ENCODE measurements at regions of chr10 and their contacts with region 1.

Region 1: DNA sequence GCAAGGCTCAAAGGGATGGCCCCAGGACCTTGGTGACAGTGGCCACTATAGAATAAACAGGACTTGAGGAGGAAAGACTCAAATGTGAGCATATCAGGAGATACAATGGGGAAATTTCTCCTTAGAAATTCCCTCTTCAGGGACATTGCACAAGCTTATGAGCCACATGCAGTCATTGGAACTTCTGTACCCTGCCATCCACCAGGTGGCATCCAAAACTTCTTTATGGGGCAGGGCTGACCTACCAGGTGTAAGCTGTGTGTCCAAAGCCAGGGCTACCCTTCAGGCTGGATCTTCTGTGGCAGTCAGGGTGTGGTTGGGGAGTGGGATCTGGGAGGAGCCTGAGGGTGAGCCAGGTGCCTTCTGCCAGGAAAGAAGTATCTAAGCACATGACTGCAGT is 36.6 kb upstream of the LRRC18 start:
- DNase-seq: peak; percentile 5
- H3K4me3 ChIP-seq: no peak overlapping the region
- H3K27ac ChIP-seq: no peak overlapping the region
- H3K4me1 ChIP-seq: no peaks in the 10 kb centered on the region
- H3K27me3 ChIP-seq: no peaks in the 10 kb centered on the region
- CTCF ChIP-seq: peak in 1 of 2 donors; percentile 55

Region 2: GRCh38 chr10:48890888-48891850 is 85.0 kb before region 1 on chr10:
- CTCF ChIA-PET with region 1: no interaction called
- dilution Hi-C with region 1: loop called (anchors 5 kb)
- in situ Hi-C with region 1: no loop called
- intact Hi-C with region 1: no loop called
- DNase-seq: no peak
- H3K4me3 ChIP-seq: no peak overlapping the region
- H3K27ac ChIP-seq: no peak overlapping the region
- H3K4me1 ChIP-seq: no peaks in the 10 kb centered on the region
- H3K27me3 ChIP-seq: no peaks in the 10 kb centered on the region
- CTCF ChIP-seq: no peak